HCT116 (cell line): ENCODE measurements at regions of chr12 and their contacts with region 1.

Region 1: GRCh38 chr12:53791735-53792326 is 40.1 kb upstream of the CISTR start:
- DNase-seq: peak; percentile 38
- ATAC-seq: peak; percentile 95
- H3K4me3 ChIP-seq: no peak overlapping the region
- H3K27ac ChIP-seq: no peak overlapping the region
- H3K4me1 ChIP-seq: no peaks in the 10 kb centered on the region
- H3K27me3 ChIP-seq: 0 out of 2 replicates have a peak, but pooled peaks cover 4% of the 10 kb centered on the region
- CTCF ChIP-seq: peak; percentile 65 to 72 (median 69); a peak in 5 of 6 replicates
- POLR2A ChIP-seq: no peak
- RAD21 ChIP-seq: peak; percentile 72

Region 2: GRCh38 chr12:53781228-53781801 is 10.5 kb before region 1 on chr12:
- CTCF ChIA-PET with region 1: interaction called, 14 read pairs
- POLR2A ChIA-PET with region 1: no interaction called
- RAD21 ChIA-PET with region 1: no interaction called
- intact Hi-C with region 1: no loop called
- DNase-seq: no peak
- ATAC-seq: no peak
- H3K4me3 ChIP-seq: no peak overlapping the region
- H3K27ac ChIP-seq: no peak overlapping the region
- H3K4me1 ChIP-seq: peaks cover 0 to 5% of the 10 kb centered on the region in 2 experiments; a peak in 1 of 4 replicates
- H3K27me3 ChIP-seq: no peaks in the 10 kb centered on the region; the same call in 1 of the 2 replicates
- CTCF ChIP-seq: no peak
- POLR2A ChIP-seq: no peak
- RAD21 ChIP-seq: no peak

Region 3: DNA sequence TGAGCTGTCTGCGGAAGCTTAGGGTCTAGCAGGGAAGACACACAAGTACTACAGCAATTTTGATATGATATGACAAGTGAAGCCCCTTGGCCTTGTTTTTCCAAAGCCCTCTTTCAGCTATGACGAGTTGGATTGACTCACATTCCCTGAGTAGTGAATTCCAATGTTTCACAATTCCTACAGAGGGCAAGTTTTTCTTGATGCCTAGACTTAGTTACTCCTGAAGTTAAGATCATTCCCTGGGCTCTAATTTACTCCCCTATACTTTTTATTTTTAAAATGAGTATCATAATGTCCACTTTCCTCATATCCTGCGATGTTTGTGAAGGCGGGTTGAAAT is 13.3 kb after region 1 on chr12:
- CTCF ChIA-PET with region 1: interaction called, 10 read pairs
- POLR2A ChIA-PET with region 1: no interaction called
- RAD21 ChIA-PET with region 1: no interaction called
- intact Hi-C with region 1: no loop called
- DNase-seq: no peak
- ATAC-seq: no peak
- H3K4me3 ChIP-seq: no peak overlapping the region
- H3K27ac ChIP-seq: no peak overlapping the region
- H3K4me1 ChIP-seq: peaks cover 0 to 2% of the 10 kb centered on the region in 2 experiments; a peak in 1 of 4 replicates
- H3K27me3 ChIP-seq: no peaks in the 10 kb centered on the region; the same call in 1 of the 2 replicates
- CTCF ChIP-seq: no peak
- POLR2A ChIP-seq: no peak
- RAD21 ChIP-seq: no peak

Region 4: DNA sequence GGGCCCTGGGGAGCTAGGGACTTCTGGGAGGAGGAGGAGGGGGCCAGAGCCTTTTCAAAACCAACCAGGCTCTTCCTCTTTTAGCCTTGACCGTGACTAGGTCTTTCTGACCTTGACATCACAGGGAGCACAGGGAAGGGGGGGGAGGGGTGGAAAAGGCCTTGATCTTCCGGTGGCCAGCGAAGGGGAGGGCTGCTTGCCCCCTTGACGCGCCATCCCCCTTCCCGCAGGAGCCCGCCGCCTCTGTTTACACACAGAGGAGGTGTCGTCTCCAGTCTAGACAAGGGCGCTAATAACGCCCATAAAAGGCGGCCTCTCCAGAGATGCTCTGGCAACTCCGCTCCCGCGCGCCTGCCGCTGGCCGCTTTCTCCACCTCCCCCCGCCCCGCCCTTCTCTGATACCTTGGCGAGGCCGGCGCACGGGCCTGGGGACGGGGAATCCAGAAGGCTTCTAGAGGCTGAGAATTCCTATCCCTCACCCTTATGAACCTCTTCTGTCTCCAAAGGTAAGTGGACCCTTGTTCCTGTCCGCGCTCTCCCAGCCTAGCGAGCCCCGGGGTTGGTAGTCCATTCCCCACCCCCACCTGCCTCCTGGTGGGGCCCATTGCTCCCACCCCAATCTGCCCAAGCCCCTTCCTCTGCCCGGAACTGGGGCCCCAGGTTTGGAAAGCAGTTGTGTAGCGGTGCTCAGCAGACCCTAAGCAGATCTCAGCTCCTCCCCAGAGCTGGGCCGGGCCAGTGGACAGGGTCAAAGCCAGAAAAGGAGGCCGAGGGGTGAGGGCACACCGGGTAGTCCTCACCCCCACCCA is 158.0 kb after region 1 on chr12:
- CTCF ChIA-PET with region 1: interaction called, 3 read pairs
- POLR2A ChIA-PET with region 1: no interaction called
- RAD21 ChIA-PET with region 1: no interaction called
- intact Hi-C with region 1: loop called (anchors 1 kb)
- DNase-seq: no peak
- ATAC-seq: no peak
- H3K4me3 ChIP-seq: no peak overlapping the region
- H3K27ac ChIP-seq: no peak overlapping the region
- H3K4me1 ChIP-seq: peaks cover 12 to 15% of the 10 kb centered on the region in 2 experiments
- H3K27me3 ChIP-seq: no peaks in the 10 kb centered on the region
- CTCF ChIP-seq: no peak
- POLR2A ChIP-seq: no peak
- RAD21 ChIP-seq: no peak